Prostate gland (tissue), 2 donors: ENCODE measurements at regions of chr10 and their contacts with region 1.

Region 1: GRCh38 chr10:103859161-103860086 is 4.0 kb upstream of the SH3PXD2A start:
- DNase-seq: peak; percentile 67
- H3K4me3 ChIP-seq: no peak overlapping the region
- H3K27ac ChIP-seq: no peak overlapping the region
- H3K4me1 ChIP-seq: no peaks in the 10 kb centered on the region
- H3K27me3 ChIP-seq: no peaks in the 10 kb centered on the region
- CTCF ChIP-seq: peak; percentile 54 to 88 (median 77)
- POLR2A ChIP-seq: no peak

Region 2: DNA sequence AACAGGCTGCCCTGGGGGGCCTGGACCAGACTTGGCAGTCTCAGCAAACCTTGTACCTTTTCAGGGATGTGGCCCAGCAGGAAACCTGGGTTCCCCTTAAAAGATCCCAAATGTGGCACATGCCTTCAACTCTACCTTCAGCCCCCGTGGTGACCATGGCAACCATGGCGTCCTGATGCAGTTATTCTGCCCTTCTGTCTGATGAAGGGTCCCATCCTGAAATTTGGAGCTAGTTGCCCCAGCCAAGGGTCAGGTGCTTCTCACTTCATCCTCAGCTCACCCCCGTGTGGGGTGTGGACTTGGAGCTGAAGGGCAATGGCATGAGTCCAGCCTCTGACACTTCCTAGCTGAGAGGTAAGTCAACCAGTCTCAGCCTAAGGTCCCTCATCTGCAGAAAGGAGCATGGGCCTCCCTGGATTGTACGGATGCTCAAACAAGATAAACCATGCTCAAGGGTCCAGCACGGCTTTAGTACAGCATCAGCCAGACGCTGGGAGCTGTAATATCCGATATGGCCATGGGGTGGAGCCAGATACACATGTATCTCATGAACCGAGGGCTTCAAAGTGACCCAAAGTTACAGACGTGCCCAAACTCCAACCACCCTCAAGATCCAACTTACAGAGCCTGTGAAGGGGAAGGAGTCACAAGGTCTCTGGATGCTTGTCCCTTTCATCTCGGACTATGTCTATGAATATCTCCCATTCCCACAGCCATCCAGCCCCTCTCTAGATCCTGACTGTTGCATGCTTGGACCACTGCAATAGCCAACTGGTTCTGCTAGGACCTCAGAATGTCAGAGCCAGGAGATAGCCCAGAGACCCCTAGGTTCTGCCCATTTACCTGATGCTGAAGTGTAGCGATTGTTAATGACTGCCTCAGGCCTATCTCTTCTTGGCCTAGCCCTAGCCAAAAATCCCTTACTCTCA is 146.6 kb before region 1 on chr10:
- intact Hi-C with region 1: loop called (anchors 1 kb)
- DNase-seq: peak; percentile 81
- H3K4me3 ChIP-seq: no peak overlapping the region
- H3K27ac ChIP-seq: no peak overlapping the region
- H3K4me1 ChIP-seq: peaks cover 5% of the 10 kb centered on the region
- H3K27me3 ChIP-seq: no peaks in the 10 kb centered on the region
- CTCF ChIP-seq: peak; percentile 85 to 96 (median 96)
- POLR2A ChIP-seq: no peak

Region 3: DNA sequence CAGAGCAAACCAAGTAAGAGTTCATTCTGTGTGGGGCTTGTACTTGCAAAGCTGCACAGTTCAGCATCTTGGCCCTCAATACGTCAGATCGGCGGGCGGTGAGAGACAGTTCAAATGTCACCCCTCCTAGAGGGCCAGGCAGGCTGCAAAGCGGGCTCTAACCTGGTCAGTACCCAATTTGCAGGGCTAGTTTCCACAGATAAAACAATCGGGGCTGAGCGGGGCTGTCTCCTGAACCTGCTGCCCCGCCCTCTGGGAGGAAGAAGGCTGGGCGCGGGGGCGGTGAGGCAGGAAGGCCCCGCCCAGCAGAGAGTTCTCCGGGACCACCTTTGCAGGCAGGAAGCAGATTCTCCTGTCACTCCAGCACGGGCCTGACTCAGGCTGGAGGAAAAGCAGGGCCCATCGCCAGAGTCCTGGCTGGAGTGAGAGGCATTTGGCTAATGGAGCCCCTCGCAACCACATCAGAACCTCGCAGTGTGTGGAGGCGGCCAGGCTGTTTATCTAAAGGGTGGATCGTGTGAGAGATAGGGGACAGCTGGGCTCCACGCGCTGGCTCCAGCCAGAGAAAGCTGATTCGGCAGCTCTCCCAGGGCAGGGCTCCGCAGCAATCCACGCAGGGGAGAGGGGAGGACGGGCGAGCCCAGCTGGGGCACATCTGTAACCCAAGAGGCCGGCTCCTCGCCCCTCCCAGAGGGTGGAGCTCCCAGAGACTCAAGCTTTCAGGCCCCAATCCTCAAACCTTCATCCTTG is 87.2 kb before region 1 on chr10:
- intact Hi-C with region 1: loop called (anchors 5 kb)
- DNase-seq: peak; percentile 71
- H3K4me3 ChIP-seq: peak overlapping the region; percentile 25 to 35
- H3K27ac ChIP-seq: peak overlapping the region; percentile 67 to 79
- H3K4me1 ChIP-seq: no peaks in the 10 kb centered on the region
- H3K27me3 ChIP-seq: no peaks in the 10 kb centered on the region
- CTCF ChIP-seq: no peak
- POLR2A ChIP-seq: peak; percentile 51

Region 4: DNA sequence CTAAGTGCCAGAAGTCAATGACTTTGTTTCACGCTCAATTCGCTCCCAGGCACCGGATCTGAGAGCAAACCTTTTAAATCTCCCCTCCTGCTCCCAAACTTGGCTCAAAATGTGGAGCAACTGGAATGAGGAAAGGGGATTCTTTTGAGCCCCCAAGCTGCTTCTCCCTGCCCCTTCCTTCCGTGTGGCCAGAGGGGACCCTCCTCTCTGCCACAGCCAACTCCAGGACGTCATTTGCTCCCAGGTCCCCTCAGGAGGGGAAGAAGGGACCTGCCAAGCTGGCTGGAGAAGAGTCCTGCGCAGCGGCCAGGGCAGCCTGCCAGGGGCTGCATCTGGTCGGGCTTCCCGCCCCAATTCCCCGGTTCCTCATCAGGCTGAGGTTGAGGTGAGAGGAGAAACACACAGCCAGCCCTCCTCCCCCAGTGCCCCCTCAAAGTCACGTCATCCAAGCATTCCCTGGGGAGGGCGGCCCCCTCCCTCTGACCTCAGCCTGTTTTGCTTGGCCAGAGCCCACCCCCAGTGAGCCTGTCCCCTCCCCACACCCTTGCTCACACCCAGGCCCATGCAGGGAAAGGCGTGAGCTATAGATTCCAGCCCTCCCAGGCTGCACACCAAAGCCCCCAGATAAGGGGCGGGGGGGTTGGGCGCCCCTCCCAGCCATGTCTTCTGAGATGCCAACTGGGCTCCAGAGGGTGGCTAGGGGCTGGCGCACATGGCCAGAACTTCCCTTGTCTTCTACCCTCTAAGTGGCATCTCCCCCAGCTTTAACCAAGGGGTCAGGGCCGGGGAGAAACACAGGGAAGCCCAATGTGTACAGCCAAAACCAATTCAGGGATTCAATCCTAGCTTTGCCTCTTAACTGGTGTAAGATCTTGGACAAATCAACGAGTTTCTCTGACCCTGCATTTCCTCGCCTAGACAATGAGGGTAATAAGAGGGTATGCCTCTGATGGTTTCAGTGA is 39.0 kb before region 1 on chr10:
- intact Hi-C with region 1: no loop called
- DNase-seq: no peak
- H3K4me3 ChIP-seq: no peak overlapping the region
- H3K27ac ChIP-seq: peak overlapping the region in 1 of 2 donors; percentile 55
- H3K4me1 ChIP-seq: peaks cover 11% of the 10 kb centered on the region
- H3K27me3 ChIP-seq: no peaks in the 10 kb centered on the region
- CTCF ChIP-seq: no peak
- POLR2A ChIP-seq: no peak